ENCODE measurements at regions of chr7 and their contacts with region 1.

Region 1: GRCh38 chr7:42893346-42894242 is 18.3 kb downstream of the C7orf25 start:
- DNase-seq: no peak
- ATAC-seq: no peak
- H3K4me3 ChIP-seq: no peak overlapping the region
- H3K27ac ChIP-seq: no peak overlapping the region
- H3K4me1 ChIP-seq: no peaks in the 10 kb centered on the region
- H3K27me3 ChIP-seq: no peaks in the 10 kb centered on the region
- CTCF ChIP-seq: no peak

Region 2: GRCh38 chr7:43318188-43318770 is 424.7 kb after region 1 on chr7:
- intact Hi-C with region 1: loop called in 1 of 2 experiments (anchors 5 kb)
- DNase-seq: no peak
- ATAC-seq: no peak
- H3K4me3 ChIP-seq: no peak overlapping the region
- H3K27ac ChIP-seq: no peak overlapping the region
- H3K4me1 ChIP-seq: no peaks in the 10 kb centered on the region
- H3K27me3 ChIP-seq: no peaks in the 10 kb centered on the region
- CTCF ChIP-seq: no peak

Measured in psoas muscle (tissue), 8 donors.